WTC11 (cell line): ENCODE measurements at regions of chr11 and their contacts with region 1.

Region 1: DNA sequence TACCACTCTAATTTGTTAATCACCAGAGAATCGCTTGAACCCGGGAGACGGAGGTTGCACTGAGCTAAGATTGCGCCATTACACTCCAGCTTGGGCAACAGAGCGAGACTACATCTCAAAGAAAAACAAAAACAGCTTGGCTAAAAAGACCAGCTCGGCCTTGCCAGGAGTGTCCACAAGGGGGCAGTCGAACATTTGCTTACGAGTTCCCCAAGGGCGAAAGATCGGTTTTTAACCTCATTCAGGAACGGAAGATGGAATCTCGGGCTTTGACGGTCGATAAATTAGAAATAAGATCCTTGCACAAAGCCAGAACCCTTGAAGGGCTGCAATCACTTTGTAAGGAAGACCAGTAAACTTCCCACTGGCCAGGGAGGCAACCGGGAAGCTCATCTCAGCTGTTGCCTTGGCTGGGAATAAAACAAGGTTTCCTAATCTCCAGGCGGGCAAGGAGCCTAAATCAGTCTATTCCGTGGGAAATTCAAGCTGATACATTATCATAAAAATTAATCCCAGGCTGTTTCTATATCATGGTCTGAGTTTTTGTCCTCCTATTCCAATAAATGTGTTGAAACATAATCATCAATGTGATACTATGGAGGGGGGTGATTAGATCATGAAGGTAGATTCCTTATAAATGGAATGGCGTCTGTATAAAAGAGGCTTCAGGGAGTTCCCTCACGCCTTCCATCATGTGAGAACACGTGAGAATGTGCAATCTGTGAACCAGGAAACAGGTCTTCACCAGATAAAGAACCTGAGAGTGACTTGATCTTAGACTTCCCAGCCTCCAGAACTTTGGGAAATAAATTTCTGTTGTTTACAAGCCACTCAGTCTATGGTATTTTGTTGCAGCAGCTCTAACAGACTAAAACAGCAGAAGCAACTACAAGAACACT is 14.9 kb upstream of the SLC29A2 start:
- DNase-seq: peak; percentile 95
- ATAC-seq: peak; percentile 74
- H3K4me3 Mint-ChIP-seq: peak overlapping the region; percentile 64
- H3K27ac Mint-ChIP-seq: no peak overlapping the region
- H3K4me1 Mint-ChIP-seq: peaks cover 6% of the 10 kb centered on the region; the same call in 1 of the 2 replicates
- H3K27me3 Mint-ChIP-seq: peaks cover 13% of the 10 kb centered on the region
- CTCF ChIP-seq: peak; percentile 79

Region 2: GRCh38 chr11:66288671-66289547 is 97.5 kb before region 1 on chr11 and contains the start of gene YIF1A:
- CTCF ChIA-PET with region 1: interaction called, 15 read pairs
- POLR2A ChIA-PET with region 1: no interaction called
- DNase-seq: peak; percentile 98
- ATAC-seq: peak; percentile 95
- H3K4me3 Mint-ChIP-seq: peak within 1 kb of the TSS; percentile 96
- H3K27ac Mint-ChIP-seq: peak within 1 kb of the TSS; percentile 96
- H3K4me1 Mint-ChIP-seq: peaks cover 20% of the 10 kb centered on the region
- H3K27me3 Mint-ChIP-seq: peaks cover 37% of the 10 kb centered on the region
- CTCF ChIP-seq: no peak
- total RNA-seq, gene YIF1A: 86.0 to 86.9 TPM (median 86.4 TPM) in 3 replicates

Region 3: GRCh38 chr11:66363805-66364535 is 22.4 kb before region 1 on chr11:
- CTCF ChIA-PET with region 1: interaction called, 24 read pairs
- POLR2A ChIA-PET with region 1: no interaction called
- DNase-seq: peak; percentile 96
- ATAC-seq: peak; percentile 75
- H3K4me3 Mint-ChIP-seq: no peak overlapping the region
- H3K27ac Mint-ChIP-seq: no peak overlapping the region
- H3K4me1 Mint-ChIP-seq: peaks cover 8% of the 10 kb centered on the region
- H3K27me3 Mint-ChIP-seq: no peaks in the 10 kb centered on the region
- CTCF ChIP-seq: peak; percentile 97

Region 4: DNA sequence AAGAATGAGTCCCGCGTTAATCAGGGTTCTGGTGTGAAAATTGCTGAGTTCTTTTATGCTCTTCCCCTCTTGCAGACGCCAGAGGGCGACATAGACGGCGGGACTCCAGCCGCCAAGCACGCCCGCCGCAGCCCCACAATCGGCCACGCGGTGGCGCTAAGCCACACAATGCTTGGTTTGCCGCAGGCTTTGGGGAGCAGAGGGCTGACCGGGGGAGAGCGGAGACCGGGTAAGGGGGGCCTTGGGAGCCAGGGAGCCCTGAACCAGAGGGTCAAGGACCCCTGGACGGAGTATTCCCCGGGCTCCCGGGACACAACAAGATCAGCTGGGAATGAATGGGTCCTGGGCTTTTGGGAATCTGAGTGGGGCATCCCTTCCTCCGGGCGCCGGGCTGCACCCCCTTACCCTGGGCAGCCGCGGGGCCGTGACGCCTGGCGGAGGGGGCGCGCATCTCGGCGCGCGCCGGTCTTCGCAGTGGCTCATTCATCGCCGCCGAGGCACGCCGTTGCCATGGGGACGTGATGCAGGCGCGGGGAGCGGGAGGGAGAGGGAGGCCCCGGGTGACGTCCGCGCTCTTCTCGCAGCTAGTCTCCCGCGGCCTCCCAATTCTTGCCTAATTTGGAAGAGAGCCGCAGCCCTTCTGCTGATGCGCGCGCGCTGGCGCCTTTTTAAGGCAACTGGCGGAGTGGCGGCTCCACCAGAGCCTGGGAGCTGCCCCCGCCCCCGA is 22.2 kb after region 1 on chr11:
- CTCF ChIA-PET with region 1: interaction called, 38 read pairs
- POLR2A ChIA-PET with region 1: no interaction called
- DNase-seq: peak; percentile 97
- ATAC-seq: peak; percentile 76
- H3K4me3 Mint-ChIP-seq: peak overlapping the region; percentile 66
- H3K27ac Mint-ChIP-seq: no peak overlapping the region
- H3K4me1 Mint-ChIP-seq: peaks cover 10% of the 10 kb centered on the region
- H3K27me3 Mint-ChIP-seq: peaks cover 34% of the 10 kb centered on the region
- CTCF ChIP-seq: peak; percentile 99

Region 5: DNA sequence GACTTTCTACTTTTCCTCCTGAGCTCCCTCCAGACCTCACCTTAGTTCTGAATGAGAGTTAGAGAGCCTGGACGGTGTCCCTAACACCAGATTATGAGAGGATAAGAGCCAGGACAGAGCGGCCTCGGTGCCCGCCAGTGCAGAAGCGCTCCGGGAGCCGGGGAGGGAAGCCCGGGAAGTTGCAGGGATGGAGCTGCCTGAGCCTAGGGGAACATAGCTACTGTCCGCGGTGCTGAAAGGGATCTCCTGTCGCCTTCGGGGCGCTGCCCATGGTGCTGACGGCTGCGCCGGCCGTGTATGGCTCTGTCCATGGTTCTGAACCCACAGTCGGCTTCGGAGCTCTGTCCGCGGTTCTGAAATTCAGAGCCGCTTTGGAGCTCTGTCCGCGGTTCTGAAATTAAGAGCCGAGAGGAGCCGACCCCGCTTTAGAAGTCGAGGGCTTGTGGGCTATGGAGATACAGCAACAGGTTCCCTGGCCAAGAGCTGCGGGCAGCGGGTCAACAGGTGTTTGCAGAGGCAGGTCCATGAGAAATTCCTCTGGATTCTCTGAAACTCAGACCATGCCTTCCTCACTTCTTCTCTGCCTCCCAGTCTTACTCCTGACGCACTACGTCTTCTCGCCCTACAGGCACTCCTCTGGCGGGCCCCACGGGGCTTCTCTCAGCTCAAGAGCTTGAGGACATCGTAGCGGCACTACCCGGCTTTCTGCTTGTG is 35.2 kb after region 1 on chr11:
- CTCF ChIA-PET with region 1: interaction called, 36 read pairs
- POLR2A ChIA-PET with region 1: interaction called, 3 read pairs
- DNase-seq: peak; percentile 95
- ATAC-seq: peak; percentile 55
- H3K4me3 Mint-ChIP-seq: peak overlapping the region; percentile 68
- H3K27ac Mint-ChIP-seq: no peak overlapping the region
- H3K4me1 Mint-ChIP-seq: peaks cover 27% of the 10 kb centered on the region
- H3K27me3 Mint-ChIP-seq: peaks cover 77% of the 10 kb centered on the region
- CTCF ChIP-seq: no peak

Region 6: GRCh38 chr11:66438504-66439466 is 52.4 kb after region 1 on chr11 and contains the start of gene MRPL11:
- CTCF ChIA-PET with region 1: interaction called, 28 read pairs
- POLR2A ChIA-PET with region 1: interaction called, 3 read pairs
- DNase-seq: peak; percentile 95
- ATAC-seq: peak; percentile 98
- H3K4me3 Mint-ChIP-seq: peak within 1 kb of the TSS; percentile 95
- H3K27ac Mint-ChIP-seq: peak within 1 kb of the TSS; percentile 99
- H3K4me1 Mint-ChIP-seq: peaks cover 10% of the 10 kb centered on the region
- H3K27me3 Mint-ChIP-seq: peaks cover 7% of the 10 kb centered on the region
- CTCF ChIP-seq: no peak; the same call in 1 of the 2 replicates
- total RNA-seq, gene MRPL11: 131 to 137 TPM (median 135 TPM) in 3 replicates

Region 7: DNA sequence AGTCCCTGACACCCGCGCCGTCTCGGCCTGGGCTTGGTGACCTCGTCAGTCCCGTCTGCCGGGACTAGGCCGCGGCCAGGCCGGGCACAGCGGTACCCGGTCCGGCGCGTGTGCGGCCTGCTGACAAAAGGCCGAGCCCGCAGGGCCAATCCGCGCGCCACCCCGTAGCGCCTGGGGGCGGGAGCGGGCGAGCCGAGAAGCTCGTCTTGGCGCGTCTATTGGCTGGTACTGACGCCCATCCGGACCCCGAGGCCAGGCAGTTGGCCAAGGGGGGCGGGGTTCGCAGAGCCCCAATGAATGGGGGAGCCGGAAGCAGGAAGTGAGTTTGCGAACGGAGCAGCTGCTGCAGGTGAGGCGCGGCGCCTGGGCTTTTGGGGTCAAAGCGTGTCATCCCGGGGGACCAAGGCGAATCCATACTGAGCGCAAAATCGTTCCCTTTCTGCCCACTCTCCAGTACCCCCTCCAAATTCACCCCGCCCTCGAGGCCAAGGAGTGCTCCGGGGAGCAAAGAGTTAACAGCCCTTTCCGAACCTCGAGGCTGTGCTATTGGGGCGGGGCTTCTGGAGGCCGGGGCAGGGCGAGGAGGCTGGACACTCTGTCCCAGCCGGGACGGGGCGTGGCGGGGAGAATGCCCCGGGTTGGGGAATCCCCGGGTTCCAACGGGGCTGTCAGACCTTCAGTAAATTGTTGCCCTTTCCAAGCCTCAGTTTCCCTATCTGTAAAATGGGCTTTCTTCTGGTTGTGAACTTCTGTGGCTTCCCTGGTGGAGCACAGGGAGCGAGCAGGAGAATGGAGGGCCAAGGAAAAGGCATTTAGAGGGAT is 93.9 kb after region 1 on chr11 and contains the start of gene DPP3:
- CTCF ChIA-PET with region 1: interaction called, 27 read pairs
- POLR2A ChIA-PET with region 1: interaction called, 5 read pairs
- DNase-seq: peak; percentile 99
- ATAC-seq: peak; percentile 90
- H3K4me3 Mint-ChIP-seq: peak within 1 kb of the TSS; percentile 95
- H3K27ac Mint-ChIP-seq: peak within 1 kb of the TSS; percentile 95
- H3K4me1 Mint-ChIP-seq: peaks cover 26% of the 10 kb centered on the region
- H3K27me3 Mint-ChIP-seq: no peaks in the 10 kb centered on the region
- CTCF ChIP-seq: no peak
- total RNA-seq, gene DPP3: 77.0 to 86.7 TPM (median 83.4 TPM) in 3 replicates